Psoas muscle (tissue), 8 donors: ENCODE measurements at regions of chrX and their contacts with region 1.

Region 1: GRCh38 chrX:139290310-139290709 is 240.2 kb upstream of the F9 start:
- DNase-seq: no peak
- ATAC-seq: no peak
- H3K4me3 ChIP-seq: no peak overlapping the region
- H3K27ac ChIP-seq: no peak overlapping the region
- H3K4me1 ChIP-seq: no peaks in the 10 kb centered on the region
- H3K27me3 ChIP-seq: peaks cover 0 to 7% (median 0%) of the 10 kb centered on the region in 3 donors
- CTCF ChIP-seq: no peak

Region 2: DNA sequence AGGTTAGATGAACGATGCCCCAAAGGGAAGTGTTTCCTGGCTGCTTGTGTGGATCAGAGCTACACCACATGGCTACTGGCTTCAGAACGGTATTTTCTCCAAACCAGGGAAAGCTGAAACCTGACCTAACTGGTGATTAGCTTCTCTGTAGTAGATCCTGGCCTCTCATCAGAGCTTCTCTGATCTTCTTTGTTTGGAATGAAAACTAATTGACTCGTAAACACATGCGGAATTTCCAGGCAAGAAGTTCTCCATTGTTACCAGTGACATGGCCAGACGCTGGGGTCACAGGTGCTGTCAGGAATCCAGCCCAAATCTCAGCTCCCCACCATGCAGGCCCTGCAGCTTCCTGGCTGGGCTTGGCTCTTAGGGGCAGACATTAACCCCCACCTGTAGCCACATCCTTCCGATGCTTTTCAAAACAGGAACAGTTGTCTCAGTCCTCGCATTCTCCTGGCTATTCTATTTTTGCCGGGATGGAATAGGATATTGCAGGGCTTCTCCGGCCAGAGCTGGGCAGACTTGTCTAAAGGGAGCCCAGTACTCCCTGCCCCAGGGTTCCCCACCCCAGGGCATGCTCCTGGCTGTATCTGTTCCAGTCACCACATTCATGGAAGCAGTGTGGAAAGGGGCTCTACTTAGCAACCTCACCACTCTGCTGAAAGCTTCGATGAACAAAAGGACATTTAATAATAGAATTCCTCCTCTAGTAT is 65.2 kb before region 1 on chrX:
- intact Hi-C with region 1: loop called in 1 of 2 experiments (anchors 5 kb)
- DNase-seq: peak in 1 of 2 donors; percentile 54
- ATAC-seq: peak; percentile 61 to 79 (median 63)
- H3K4me3 ChIP-seq: peak overlapping the region; percentile 32
- H3K27ac ChIP-seq: peak overlapping the region; percentile 73
- H3K4me1 ChIP-seq: peaks cover 18% of the 10 kb centered on the region
- H3K27me3 ChIP-seq: no peaks in the 10 kb centered on the region
- CTCF ChIP-seq: no peak